MCF 10A (cell line): ENCODE measurements at regions of chr2 and their contacts with region 1.

Region 1: GRCh38 chr2:40244675-40245074 is 207.2 kb downstream of the SLC8A1 start:
- DNase-seq: peak; percentile 73
- H3K4me3 Mint-ChIP-seq: no peak overlapping the region
- H3K27ac Mint-ChIP-seq: no peak overlapping the region
- H3K4me1 Mint-ChIP-seq: peaks cover 5% of the 10 kb centered on the region
- H3K27me3 Mint-ChIP-seq: no peaks in the 10 kb centered on the region
- CTCF ChIP-seq: peak; percentile 30

Region 2: DNA sequence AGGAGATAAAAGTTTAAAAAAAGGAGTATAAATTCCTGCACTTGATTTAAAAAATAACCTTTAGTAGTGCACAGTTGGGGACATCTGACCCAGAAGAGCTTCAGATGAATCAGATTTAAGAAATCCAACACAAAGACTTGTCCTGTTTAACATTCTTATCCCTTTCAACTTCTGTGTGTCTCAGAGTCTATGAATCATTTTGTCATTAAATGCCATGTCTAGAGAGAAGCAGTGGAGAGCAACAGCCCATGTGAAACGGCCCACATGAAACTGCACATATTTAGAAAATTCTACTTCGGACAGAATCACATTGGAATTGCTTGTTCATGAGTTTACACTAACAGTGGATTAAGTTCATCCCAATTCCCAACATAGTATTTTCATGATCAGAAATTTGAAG is 71.4 kb before region 1 on chr2:
- CTCF ChIA-PET with region 1: no interaction called
- POLR2A ChIA-PET with region 1: no interaction called
- intact Hi-C with region 1: no loop called
- DNase-seq: no peak
- H3K4me3 Mint-ChIP-seq: no peak overlapping the region
- H3K27ac Mint-ChIP-seq: no peak overlapping the region
- H3K4me1 Mint-ChIP-seq: no peaks in the 10 kb centered on the region
- H3K27me3 Mint-ChIP-seq: no peaks in the 10 kb centered on the region
- CTCF ChIP-seq: no peak

Region 3: GRCh38 chr2:40212804-40213470 is 31.7 kb before region 1 on chr2:
- CTCF ChIA-PET with region 1: interaction called, 11 read pairs
- POLR2A ChIA-PET with region 1: no interaction called
- intact Hi-C with region 1: no loop called
- DNase-seq: peak; percentile 26
- H3K4me3 Mint-ChIP-seq: no peak overlapping the region
- H3K27ac Mint-ChIP-seq: no peak overlapping the region
- H3K4me1 Mint-ChIP-seq: no peaks in the 10 kb centered on the region
- H3K27me3 Mint-ChIP-seq: no peaks in the 10 kb centered on the region
- CTCF ChIP-seq: peak; percentile 25

Region 4: GRCh38 chr2:40260437-40260836 is 15.8 kb after region 1 on chr2:
- CTCF ChIA-PET with region 1: interaction called, 15 read pairs
- POLR2A ChIA-PET with region 1: no interaction called
- intact Hi-C with region 1: no loop called
- DNase-seq: no peak
- H3K4me3 Mint-ChIP-seq: no peak overlapping the region
- H3K27ac Mint-ChIP-seq: no peak overlapping the region
- H3K4me1 Mint-ChIP-seq: peaks cover 6% of the 10 kb centered on the region
- H3K27me3 Mint-ChIP-seq: no peaks in the 10 kb centered on the region
- CTCF ChIP-seq: no peak

Region 5: GRCh38 chr2:40448468-40449079 is 203.9 kb after region 1 on chr2:
- CTCF ChIA-PET with region 1: interaction called, 6 read pairs
- POLR2A ChIA-PET with region 1: no interaction called
- intact Hi-C with region 1: loop called (anchors 2 kb)
- DNase-seq: peak; percentile 54
- H3K4me3 Mint-ChIP-seq: no peak overlapping the region
- H3K27ac Mint-ChIP-seq: no peak overlapping the region
- H3K4me1 Mint-ChIP-seq: peaks cover 17% of the 10 kb centered on the region
- H3K27me3 Mint-ChIP-seq: no peaks in the 10 kb centered on the region
- CTCF ChIP-seq: peak; percentile 45

Region 6: GRCh38 chr2:40470822-40471813 is 226.4 kb after region 1 on chr2:
- CTCF ChIA-PET with region 1: no interaction called
- POLR2A ChIA-PET with region 1: no interaction called
- intact Hi-C with region 1: no loop called
- DNase-seq: no peak
- H3K4me3 Mint-ChIP-seq: no peak overlapping the region
- H3K27ac Mint-ChIP-seq: no peak overlapping the region
- H3K4me1 Mint-ChIP-seq: no peaks in the 10 kb centered on the region
- H3K27me3 Mint-ChIP-seq: no peaks in the 10 kb centered on the region
- CTCF ChIP-seq: no peak

Region 7: DNA sequence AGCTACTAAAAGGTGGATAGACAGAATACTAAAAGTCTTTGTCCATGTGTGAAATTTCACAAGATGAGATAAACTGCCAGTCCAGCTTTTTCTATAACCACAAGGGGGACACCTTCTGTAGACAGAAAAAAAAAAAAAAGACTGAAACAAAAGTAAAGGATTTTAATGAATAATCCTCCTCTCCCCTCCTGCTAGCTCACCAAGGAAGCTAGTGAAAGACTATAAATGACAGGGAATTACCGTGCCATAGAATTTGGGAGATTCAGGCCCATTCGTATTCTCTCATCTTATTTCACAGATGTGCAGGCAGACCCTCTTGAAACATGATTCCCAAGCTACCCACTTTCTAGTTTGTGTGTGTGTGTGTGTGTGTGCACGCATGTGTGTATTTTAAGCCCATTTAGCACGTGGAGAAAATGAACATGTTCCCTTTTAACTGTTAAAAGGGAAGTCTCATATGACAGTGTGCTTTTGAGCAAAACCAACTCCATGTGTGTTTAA is 243.5 kb after region 1 on chr2:
- CTCF ChIA-PET with region 1: no interaction called
- POLR2A ChIA-PET with region 1: no interaction called
- intact Hi-C with region 1: loop called (anchors 5 kb)
- DNase-seq: peak; percentile 51
- H3K4me3 Mint-ChIP-seq: no peak overlapping the region
- H3K27ac Mint-ChIP-seq: no peak overlapping the region
- H3K4me1 Mint-ChIP-seq: peaks cover 19% of the 10 kb centered on the region
- H3K27me3 Mint-ChIP-seq: no peaks in the 10 kb centered on the region
- CTCF ChIP-seq: peak; percentile 40

Region 8: DNA sequence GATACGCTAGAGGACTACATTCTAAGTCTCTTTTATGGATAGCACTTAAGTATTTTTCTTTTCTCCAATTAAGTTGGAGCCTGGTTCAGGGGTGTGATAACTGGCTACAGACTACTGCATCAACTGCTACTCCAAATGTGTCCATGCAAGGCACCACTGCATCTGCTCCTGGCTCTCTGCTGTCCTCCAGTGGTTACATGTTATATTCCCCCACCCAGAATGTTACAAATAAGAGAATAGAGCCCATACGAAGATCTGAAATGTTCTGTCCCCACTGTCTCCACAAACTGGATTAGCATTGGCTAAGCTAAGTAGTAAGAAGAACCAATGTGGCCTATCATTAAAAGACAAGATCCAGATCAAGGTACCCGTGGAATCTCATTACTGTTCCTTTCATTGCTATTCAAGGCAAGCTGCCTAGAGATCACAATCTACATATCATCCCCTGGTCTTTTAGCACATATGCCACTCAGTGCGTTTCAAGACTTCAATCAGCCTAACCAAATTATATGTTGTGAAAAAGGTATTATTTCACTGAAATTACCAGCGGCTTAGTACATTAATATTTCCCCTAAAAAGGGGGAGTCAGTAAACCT is 515.5 kb after region 1 on chr2:
- CTCF ChIA-PET with region 1: interaction called, 10 read pairs
- POLR2A ChIA-PET with region 1: no interaction called
- intact Hi-C with region 1: loop called (anchors 1 kb)
- DNase-seq: peak; percentile 64
- H3K4me3 Mint-ChIP-seq: no peak overlapping the region
- H3K27ac Mint-ChIP-seq: no peak overlapping the region
- H3K4me1 Mint-ChIP-seq: no peaks in the 10 kb centered on the region
- H3K27me3 Mint-ChIP-seq: no peaks in the 10 kb centered on the region
- CTCF ChIP-seq: peak; percentile 87

Region 9: GRCh38 chr2:42117923-42118753 is 1873.5 kb after region 1 on chr2:
- CTCF ChIA-PET with region 1: no interaction called
- POLR2A ChIA-PET with region 1: no interaction called
- intact Hi-C with region 1: no loop called
- DNase-seq: peak; percentile 59
- H3K4me3 Mint-ChIP-seq: no peak overlapping the region
- H3K27ac Mint-ChIP-seq: no peak overlapping the region
- H3K4me1 Mint-ChIP-seq: peaks cover 23% of the 10 kb centered on the region
- H3K27me3 Mint-ChIP-seq: no peaks in the 10 kb centered on the region
- CTCF ChIP-seq: no peak